ENCODE measurements at regions of chr2 and their contacts with region 1.

Region 1: DNA sequence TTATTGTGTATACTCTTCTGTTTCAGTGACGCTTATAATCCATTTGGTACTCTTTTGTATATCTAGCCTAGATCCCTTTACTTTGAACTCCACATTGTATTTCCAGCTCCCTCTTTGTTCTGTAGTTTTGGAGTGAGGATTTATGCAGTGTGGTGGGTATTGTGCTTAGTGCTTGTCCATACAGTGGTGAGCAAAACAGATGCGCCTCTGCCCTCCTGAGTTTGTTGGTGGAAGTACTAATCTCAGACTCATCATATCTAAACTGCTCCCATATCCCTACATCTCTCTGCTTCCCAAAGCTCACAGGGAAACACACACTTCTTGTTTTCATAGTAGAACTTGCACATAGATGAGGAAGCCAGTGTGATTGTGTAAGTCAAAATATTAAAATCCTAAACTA is 12.1 kb downstream of the PTCD3 start:
- DNase-seq: no peak
- H3K4me3 ChIP-seq: no peak overlapping the region
- H3K27ac ChIP-seq: no peak overlapping the region
- H3K4me1 ChIP-seq: peaks cover 0 to 8% (median 3%) of the 10 kb centered on the region in 4 experiments; a peak in 4 of 7 replicates
- H3K27me3 ChIP-seq: no peaks in the 10 kb centered on the region
- CTCF ChIP-seq: no peak
- EP300 ChIP-seq: no peak
- POLR2A ChIP-seq: no peak
- RAD21 ChIP-seq: no peak

Region 2: GRCh38 chr2:86087936-86088850 is 29.9 kb before region 1 on chr2:
- CTCF ChIA-PET with region 1: interaction called, 15 read pairs
- POLR2A ChIA-PET with region 1: interaction called, 16 read pairs
- DNase-seq: no peak
- H3K4me3 ChIP-seq: no peak overlapping the region
- H3K27ac ChIP-seq: no peak overlapping the region
- H3K4me1 ChIP-seq: no peaks in the 10 kb centered on the region
- H3K27me3 ChIP-seq: no peaks in the 10 kb centered on the region
- CTCF ChIP-seq: peak; percentile 28 to 46 (median 38)
- EP300 ChIP-seq: no peak
- POLR2A ChIP-seq: no peak
- RAD21 ChIP-seq: peak in 1 of 2 experiments; percentile 29; a peak in 1 of 4 replicates

Region 3: GRCh38 chr2:86319700-86320580 is 201.8 kb after region 1 on chr2:
- CTCF ChIA-PET with region 1: no interaction called
- POLR2A ChIA-PET with region 1: no interaction called
- DNase-seq: no peak
- H3K4me3 ChIP-seq: no peak overlapping the region
- H3K27ac ChIP-seq: no peak overlapping the region
- H3K4me1 ChIP-seq: peaks cover 0 to 5% (median 1%) of the 10 kb centered on the region in 4 experiments; a peak in 1 of 7 replicates
- H3K27me3 ChIP-seq: no peaks in the 10 kb centered on the region; a peak in 2 of 7 replicates
- CTCF ChIP-seq: no peak
- EP300 ChIP-seq: no peak
- POLR2A ChIP-seq: no peak
- RAD21 ChIP-seq: no peak